AG04449 (cell line): ENCODE measurements at regions of chr20 and their contacts with region 1.

Region 1: DNA sequence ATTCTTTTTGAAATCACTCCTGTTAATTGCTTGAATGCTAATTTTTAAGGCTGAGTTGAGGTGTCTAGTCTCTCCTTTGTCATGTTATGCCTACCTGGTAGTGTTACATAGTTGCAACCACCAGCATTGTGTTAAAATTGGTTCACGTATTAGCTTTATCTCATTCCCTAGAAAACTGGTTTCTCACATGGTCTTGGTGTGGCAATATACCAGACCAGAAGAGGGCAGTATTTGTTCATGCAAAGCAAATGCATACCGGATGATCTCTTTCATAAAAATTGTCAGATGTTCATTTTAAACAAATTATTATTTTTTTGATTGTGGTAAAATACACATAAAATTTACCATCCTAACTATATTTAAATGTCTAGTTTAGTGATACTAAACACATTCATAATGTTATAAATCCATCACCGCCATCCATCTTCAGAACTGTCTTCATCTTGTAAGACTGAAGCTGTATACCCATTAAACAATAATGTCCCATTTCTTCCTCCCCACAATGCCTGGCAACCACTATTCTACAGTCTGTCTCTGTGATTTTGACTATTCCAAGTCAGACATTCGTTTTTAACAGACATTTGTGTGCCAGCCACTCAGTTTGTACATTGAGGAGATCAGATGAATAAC is 92.8 kb downstream of the ATRN start:
- DNase-seq: peak; percentile 10
- H3K4me3 ChIP-seq: no peak overlapping the region
- CTCF ChIP-seq: peak; percentile 62

Region 2: DNA sequence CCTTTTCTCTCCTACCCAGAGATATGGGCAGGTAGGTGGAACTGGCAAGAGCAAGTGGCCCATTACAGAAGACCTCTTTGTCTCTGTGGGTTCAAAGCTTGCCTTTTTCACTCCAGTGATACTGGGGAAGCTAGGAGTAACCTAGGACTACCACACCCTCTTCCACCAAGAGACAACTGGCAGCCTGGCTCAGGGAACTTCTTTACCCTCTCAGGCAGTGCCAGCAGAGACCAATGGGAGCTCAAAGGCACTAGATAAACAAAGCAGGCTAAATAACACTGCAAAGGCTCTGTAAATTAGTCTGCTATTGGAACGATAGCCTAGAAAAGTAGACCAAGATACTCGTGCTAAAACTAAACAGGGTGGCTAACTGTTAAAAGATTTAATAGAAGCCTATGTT is 60.8 kb before region 1 on chr20:
- CTCF ChIA-PET with region 1: no interaction called
- POLR2A ChIA-PET with region 1: no interaction called
- DNase-seq: no peak
- H3K4me3 ChIP-seq: no peak overlapping the region
- CTCF ChIP-seq: no peak

Region 3: DNA sequence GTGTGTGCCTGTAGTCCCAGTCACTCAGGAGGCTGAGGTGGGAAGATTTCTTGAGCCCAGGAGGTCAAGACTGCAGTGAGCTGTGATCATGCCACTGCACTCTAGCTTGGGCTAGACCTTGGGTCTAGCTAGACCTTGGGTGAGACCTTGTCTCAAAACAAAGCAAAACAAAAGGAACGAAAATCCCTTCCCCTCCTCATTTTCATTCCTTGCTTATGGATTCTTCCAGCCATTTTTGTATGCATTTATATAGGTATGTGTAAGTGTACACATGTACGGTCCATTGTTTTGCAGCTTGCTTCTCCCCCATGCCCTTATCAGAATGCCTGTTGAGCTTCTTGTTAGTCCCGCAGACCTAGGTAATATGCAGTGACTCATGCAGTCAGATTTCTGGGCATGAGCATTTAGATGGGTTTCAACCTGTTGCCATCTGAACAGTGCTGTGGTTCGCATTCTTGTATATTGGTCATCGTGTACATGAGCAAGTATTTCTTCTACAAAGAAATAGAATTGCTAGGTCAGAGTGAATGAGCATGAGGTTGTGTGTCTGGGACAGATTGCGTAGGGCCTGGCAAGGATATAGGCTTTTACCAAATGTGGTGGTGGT is 19.7 kb before region 1 on chr20:
- CTCF ChIA-PET with region 1: interaction called, 62 read pairs
- POLR2A ChIA-PET with region 1: no interaction called
- DNase-seq: peak; percentile 16
- H3K4me3 ChIP-seq: no peak overlapping the region
- CTCF ChIP-seq: no peak

Region 4: DNA sequence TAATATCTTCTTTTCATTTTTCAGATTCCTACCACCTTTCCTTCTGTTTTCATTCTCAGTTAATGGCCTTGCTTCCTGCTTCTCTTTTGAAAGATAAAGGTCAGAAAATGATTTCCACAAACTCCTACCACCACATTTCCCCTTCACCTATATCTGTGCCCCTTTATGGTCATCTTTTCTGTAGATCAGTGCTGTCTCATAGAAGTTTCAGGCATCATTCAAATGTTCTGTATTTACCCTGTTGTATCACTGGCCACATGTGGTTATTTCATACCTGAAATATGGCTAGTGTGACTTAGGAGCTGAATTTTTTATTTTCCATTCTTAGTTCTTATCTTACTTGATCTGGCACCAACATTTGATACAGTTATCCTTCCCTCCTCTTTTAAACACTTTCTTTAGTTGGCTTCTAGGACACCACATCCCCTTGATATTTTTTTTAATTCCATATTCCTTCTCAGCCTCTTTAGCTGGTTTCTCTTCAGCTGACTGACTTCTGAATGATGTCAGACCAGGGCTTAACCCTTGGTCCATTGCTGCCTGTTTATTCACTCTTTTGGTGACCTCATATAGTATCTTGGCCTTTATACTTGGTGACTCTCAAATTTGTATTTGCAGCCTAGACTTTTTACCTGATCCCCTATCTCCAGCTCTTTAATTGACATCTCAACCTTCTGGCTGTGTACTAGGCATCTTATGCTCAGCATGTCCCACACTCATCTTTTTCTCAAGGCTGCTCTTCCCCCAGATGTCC is 11.8 kb before region 1 on chr20:
- CTCF ChIA-PET with region 1: interaction called, 62 read pairs
- POLR2A ChIA-PET with region 1: no interaction called
- DNase-seq: no peak
- H3K4me3 ChIP-seq: no peak overlapping the region
- CTCF ChIP-seq: no peak

Region 5: GRCh38 chr20:3612795-3613572 is 49.3 kb after region 1 on chr20:
- CTCF ChIA-PET with region 1: interaction called, 12 read pairs
- POLR2A ChIA-PET with region 1: no interaction called
- DNase-seq: no peak
- H3K4me3 ChIP-seq: no peak overlapping the region
- CTCF ChIP-seq: no peak

Region 6: DNA sequence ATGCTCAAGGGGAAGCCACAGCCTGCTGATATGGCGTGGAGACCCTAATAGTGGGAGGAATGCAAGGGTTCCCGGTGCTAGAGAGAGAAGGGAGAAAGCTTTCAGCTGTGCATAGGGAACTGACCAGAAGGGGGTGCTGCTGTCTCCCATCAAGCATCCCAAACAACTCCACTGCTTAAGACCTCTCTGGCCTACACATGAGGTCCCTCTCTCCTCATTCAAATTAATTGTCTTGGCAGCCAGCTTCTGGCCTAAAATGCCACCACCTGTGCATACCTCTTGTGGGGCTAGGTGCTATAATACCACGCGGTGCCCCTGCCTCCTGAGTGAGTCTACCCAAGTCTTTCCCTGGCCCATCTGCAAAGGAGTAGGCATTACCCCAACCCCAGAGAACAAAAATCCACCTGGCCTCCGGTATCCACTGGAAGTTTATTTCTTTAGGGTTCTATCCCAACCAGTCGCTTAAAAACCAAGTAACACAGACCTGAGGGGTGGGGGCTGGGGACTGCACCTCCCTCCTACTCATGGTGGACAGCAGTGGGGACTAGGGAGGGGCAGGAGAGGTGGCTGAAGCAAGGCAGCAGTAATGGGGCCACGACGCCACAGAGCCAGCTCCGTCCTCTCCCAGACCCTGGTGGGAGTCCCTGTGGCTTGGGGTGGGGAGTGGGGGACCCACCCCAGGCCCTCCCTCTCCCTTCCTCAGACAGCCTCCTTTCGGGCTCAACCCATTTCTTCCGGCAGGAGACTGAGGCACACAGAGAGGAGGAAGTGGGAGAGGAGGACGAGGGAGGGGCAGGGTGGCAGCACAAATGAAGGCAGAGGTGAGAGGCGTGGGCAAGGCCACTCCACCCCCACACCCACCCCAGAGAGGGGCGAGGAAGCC is 189.7 kb after region 1 on chr20:
- CTCF ChIA-PET with region 1: interaction called, 11 read pairs
- POLR2A ChIA-PET with region 1: no interaction called
- DNase-seq: peak; percentile 16
- H3K4me3 ChIP-seq: no peak overlapping the region
- CTCF ChIP-seq: peak; percentile 83

Region 7: DNA sequence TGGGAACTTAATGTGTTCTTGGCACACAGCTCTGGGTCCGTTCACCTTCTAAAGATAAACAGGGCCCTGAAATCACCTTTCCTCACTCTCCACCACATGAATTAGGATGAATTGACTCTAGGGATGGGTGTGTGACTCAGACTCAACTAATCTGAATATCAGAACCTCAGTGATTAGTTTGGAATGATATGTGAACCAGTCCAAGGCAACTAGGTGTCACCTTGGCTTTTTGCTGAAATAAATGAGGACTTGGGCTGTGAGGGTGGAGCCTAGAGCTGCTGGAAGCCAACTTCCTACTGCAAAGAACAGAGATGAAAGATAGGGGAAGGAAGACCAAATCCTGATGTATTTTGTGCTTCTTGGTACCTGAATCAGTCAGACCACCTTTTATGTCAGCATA is 583.7 kb after region 1 on chr20:
- CTCF ChIA-PET with region 1: no interaction called
- POLR2A ChIA-PET with region 1: no interaction called
- DNase-seq: no peak
- H3K4me3 ChIP-seq: no peak overlapping the region
- CTCF ChIP-seq: no peak